ENCODE measurements at regions of chr2 and their contacts with region 1.

Region 1: GRCh38 chr2:241149925-241150659 is at the start of gene PPP1R7:
- DNase-seq: peak; percentile 97
- H3K4me3 ChIP-seq: peak within 1 kb of the TSS; percentile 74 to 98 (median 92)
- H3K27ac ChIP-seq: peak within 1 kb of the TSS; percentile 77 to 90 (median 86)
- H3K4me1 ChIP-seq: peaks cover 0 to 30% (median 15%) of the 10 kb centered on the region in 4 donors
- H3K27me3 ChIP-seq: no peaks in the 10 kb centered on the region
- CTCF ChIP-seq: no peak
- EP300 ChIP-seq: no peak
- POLR2A ChIP-seq: peak in 1 of 2 donors; percentile 48
- total RNA-seq, gene PPP1R7: 41.3 to 63.5 (median 56.8) TPM

Region 2: DNA sequence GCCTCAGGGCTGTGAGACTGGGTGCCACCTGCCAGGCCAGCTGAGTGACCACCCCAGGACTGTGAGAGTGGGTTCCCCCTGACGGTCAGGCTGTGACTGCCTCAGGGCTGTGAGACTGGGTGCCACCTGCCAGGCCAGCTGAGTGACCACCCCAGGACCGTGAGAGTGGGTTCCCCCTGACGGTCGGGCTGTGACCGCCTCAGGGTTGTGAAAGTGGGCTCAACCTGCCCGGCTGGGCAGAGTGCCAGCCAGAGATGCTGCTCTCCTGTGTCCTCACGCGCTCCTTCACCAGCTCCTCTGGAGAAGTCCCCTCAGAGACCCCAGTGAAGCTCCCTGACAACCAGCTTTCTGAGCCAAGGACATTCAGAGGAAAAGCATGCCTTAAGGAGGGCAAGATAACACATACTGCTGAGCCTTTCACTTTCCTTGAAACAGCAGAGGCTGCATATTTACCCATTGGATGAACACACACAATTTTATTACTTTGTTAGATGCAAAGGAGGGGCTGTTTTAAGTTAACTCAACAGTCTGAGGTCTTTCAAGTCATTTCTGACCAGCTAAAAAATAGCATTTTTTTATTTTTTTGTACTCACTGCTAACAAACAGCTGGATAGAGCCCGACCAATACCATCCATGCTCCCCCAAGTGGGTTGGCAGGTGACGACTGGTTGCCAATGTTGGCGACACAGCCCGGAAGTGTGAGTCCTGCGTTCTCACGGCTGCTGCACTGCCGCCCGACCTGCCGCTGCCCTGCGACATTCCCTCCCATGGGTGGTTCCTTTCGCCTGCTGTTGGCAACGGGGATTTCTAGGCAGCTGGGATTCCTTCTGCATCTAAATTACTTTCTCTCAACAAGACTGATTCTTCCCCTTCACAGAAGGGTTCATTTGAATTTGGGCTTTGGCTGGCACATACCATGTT is 1195.7 kb before region 1 on chr2:
- intact Hi-C with region 1: no loop called
- DNase-seq: peak; percentile 85
- H3K4me3 ChIP-seq: peak overlapping the region in 1 of 4 donors; percentile 23
- H3K27ac ChIP-seq: peak overlapping the region; percentile 83 to 91 (median 87)
- H3K4me1 ChIP-seq: peaks cover 0 to 64% (median 60%) of the 10 kb centered on the region in 4 donors
- H3K27me3 ChIP-seq: no peaks in the 10 kb centered on the region
- CTCF ChIP-seq: no peak
- EP300 ChIP-seq: no peak
- POLR2A ChIP-seq: no peak

Region 3: DNA sequence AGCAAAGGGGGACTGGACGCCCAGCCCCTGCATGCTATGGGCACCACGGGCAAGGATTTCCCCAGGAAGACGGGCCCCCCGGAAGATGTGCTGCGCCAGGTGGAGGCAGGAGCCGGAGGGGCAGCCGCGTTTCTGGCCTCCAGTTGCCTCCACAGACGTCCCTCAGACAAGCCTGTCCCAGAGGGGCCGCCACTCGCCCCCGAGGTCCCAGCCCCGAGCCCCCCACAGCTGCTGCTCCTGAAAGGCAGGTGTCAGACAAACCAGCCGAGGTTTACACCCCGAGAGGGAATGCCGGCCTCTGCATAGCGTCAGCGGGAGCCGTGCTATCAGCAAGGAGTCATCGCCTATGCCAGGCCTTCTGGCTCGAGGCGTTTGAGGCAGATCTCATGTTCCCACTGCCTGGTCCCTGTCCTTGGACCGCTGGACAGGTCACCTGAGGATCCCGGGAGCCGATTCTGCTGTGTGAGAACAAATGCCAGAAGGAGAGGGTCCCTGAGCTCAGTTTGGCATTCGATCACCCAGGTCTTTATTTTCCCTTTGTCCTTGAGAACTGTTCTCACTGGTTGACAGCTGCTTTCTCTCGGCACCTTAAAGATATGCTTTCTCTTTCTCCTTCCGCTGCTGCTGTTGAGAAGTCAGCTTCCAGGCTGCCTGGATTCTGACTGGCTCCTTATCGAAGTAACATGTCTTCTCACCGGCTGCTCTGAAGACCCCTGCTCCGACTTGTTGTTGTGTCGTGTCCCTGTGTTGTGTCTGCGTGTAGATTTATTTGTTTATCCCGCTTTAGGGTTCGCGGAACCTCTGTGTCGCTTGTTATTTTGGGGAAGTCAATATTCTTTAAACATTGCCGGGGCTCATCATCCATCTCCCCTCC is 223.3 kb before region 1 on chr2:
- intact Hi-C with region 1: no loop called
- DNase-seq: peak; percentile 65
- H3K4me3 ChIP-seq: peak overlapping the region in 3 of 4 donors; percentile 8 to 29 (median 28)
- H3K27ac ChIP-seq: no peak overlapping the region
- H3K4me1 ChIP-seq: peaks cover 0 to 5% (median 0%) of the 10 kb centered on the region in 4 donors
- H3K27me3 ChIP-seq: peaks cover 0 to 3% (median 0%) of the 10 kb centered on the region in 3 donors
- CTCF ChIP-seq: no peak
- EP300 ChIP-seq: no peak
- POLR2A ChIP-seq: no peak

Region 4: DNA sequence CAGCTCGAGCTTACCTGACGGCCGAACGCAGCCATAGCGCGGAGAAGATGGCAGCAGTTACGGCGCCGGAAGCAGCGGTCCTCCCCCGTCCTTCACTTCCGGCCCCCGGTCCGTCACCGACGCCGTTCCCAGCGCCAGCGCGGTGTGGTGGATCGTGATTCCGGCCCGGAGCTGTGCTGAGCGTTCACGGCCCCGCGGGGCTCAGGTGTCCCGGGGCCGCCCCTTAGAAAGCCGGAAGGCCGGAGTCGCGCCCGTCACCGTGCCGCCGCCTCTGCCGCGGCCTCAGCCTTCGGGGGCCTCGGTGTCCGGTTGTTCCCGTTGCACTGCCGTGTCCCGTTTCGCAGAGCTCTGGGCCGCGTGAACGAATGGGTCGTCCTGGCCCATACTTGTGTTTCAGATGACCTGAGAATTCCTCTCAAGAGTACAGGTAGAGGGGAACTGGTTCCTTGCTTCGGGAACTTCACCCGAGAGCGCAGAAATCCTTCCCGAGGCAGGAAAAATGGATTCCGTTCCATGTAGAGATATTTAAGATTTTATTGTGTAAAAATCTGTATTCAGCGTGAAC is 47.8 kb before region 1 on chr2 and contains the start of gene MTERF4:
- intact Hi-C with region 1: loop called (anchors 2 kb)
- DNase-seq: peak; percentile 93
- H3K4me3 ChIP-seq: peak within 1 kb of the TSS; percentile 72 to 87 (median 84)
- H3K27ac ChIP-seq: peak within 1 kb of the TSS; percentile 82 to 88 (median 86)
- H3K4me1 ChIP-seq: peaks cover 0 to 22% (median 20%) of the 10 kb centered on the region in 4 donors
- H3K27me3 ChIP-seq: no peaks in the 10 kb centered on the region
- CTCF ChIP-seq: no peak
- EP300 ChIP-seq: no peak
- POLR2A ChIP-seq: peak in 1 of 2 donors; percentile 27
- total RNA-seq, gene MTERF4: 18.9 to 47.9 (median 33.2) TPM

Region 5: GRCh38 chr2:241217320-241218031 is 67.4 kb after region 1 on chr2:
- intact Hi-C with region 1: loop called (anchors 2 kb)
- DNase-seq: peak; percentile 87
- H3K4me3 ChIP-seq: peak overlapping the region; percentile 36 to 54 (median 48)
- H3K27ac ChIP-seq: peak overlapping the region; percentile 80 to 89 (median 83)
- H3K4me1 ChIP-seq: peaks cover 0 to 18% (median 11%) of the 10 kb centered on the region in 4 donors
- H3K27me3 ChIP-seq: no peaks in the 10 kb centered on the region
- CTCF ChIP-seq: no peak
- EP300 ChIP-seq: no peak
- POLR2A ChIP-seq: no peak

Region 6: GRCh38 chr2:241309684-241310117 is 159.6 kb after region 1 on chr2:
- intact Hi-C with region 1: loop called (anchors 5 kb)
- DNase-seq: no peak
- H3K4me3 ChIP-seq: no peak overlapping the region
- H3K27ac ChIP-seq: no peak overlapping the region
- H3K4me1 ChIP-seq: peaks cover 0 to 42% (median 25%) of the 10 kb centered on the region in 4 donors
- H3K27me3 ChIP-seq: no peaks in the 10 kb centered on the region
- CTCF ChIP-seq: no peak
- EP300 ChIP-seq: no peak
- POLR2A ChIP-seq: no peak

Measured in sigmoid colon (tissue), 7 donors.